ENCODE measurements at regions of chr3 and their contacts with region 1.

Region 1: GRCh38 chr3:100334488-100335351 is at the start of gene NIT2:
- DNase-seq: peak; percentile 73
- ATAC-seq: peak; percentile 97
- H3K4me3 ChIP-seq: peak within 1 kb of the TSS; percentile 72 to 79
- H3K27ac ChIP-seq: peak within 1 kb of the TSS; percentile 79
- H3K4me1 ChIP-seq: peaks cover 7 to 18% of the 10 kb centered on the region in 2 experiments
- H3K27me3 ChIP-seq: no peaks in the 10 kb centered on the region
- CTCF ChIP-seq: no peak
- POLR2A ChIP-seq: peak; percentile 89
- RAD21 ChIP-seq: no peak
- total RNA-seq, gene NIT2: 44.7 TPM

Region 2: GRCh38 chr3:100269410-100270217 is 65.1 kb before region 1 on chr3:
- CTCF ChIA-PET with region 1: no interaction called
- POLR2A ChIA-PET with region 1: no interaction called
- RAD21 ChIA-PET with region 1: no interaction called
- intact Hi-C with region 1: loop called (anchors 10 kb)
- DNase-seq: peak; percentile 55
- ATAC-seq: peak; percentile 88
- H3K4me3 ChIP-seq: peak overlapping the region in 1 of 2 experiments; percentile 12; a peak in 1 of 4 replicates
- H3K27ac ChIP-seq: peak overlapping the region; percentile 3; the same call in 1 of the 2 replicates
- H3K4me1 ChIP-seq: peaks cover 3 to 23% of the 10 kb centered on the region in 2 experiments; a peak in 3 of 4 replicates
- H3K27me3 ChIP-seq: no peaks in the 10 kb centered on the region
- CTCF ChIP-seq: no peak
- POLR2A ChIP-seq: no peak
- RAD21 ChIP-seq: no peak

Region 3: GRCh38 chr3:100352296-100353231 is 17.8 kb after region 1 on chr3:
- CTCF ChIA-PET with region 1: no interaction called
- POLR2A ChIA-PET with region 1: no interaction called
- RAD21 ChIA-PET with region 1: no interaction called
- intact Hi-C with region 1: no loop called
- DNase-seq: no peak
- ATAC-seq: no peak
- H3K4me3 ChIP-seq: no peak overlapping the region
- H3K27ac ChIP-seq: no peak overlapping the region
- H3K4me1 ChIP-seq: no peaks in the 10 kb centered on the region
- H3K27me3 ChIP-seq: no peaks in the 10 kb centered on the region
- CTCF ChIP-seq: no peak
- POLR2A ChIP-seq: no peak
- RAD21 ChIP-seq: no peak

Measured in HCT116 (cell line).